WTC11 (cell line): ENCODE measurements at regions of chr10 and their contacts with region 1.

Region 1: GRCh38 chr10:8306685-8307364 is 252.3 kb downstream of the GATA3 start:
- DNase-seq: no peak
- ATAC-seq: peak; percentile 55; the same call in 1 of the 2 replicates
- H3K4me3 Mint-ChIP-seq: no peak overlapping the region
- H3K27ac Mint-ChIP-seq: peak overlapping the region; percentile 55; the same call in 1 of the 2 replicates
- H3K4me1 Mint-ChIP-seq: peaks cover 39% of the 10 kb centered on the region
- H3K27me3 Mint-ChIP-seq: no peaks in the 10 kb centered on the region; the same call in 1 of the 2 replicates
- CTCF ChIP-seq: no peak

Region 2: GRCh38 chr10:8275911-8276310 is 30.9 kb before region 1 on chr10:
- CTCF ChIA-PET with region 1: no interaction called
- POLR2A ChIA-PET with region 1: interaction called, 11 read pairs
- DNase-seq: no peak
- ATAC-seq: no peak
- H3K4me3 Mint-ChIP-seq: no peak overlapping the region
- H3K27ac Mint-ChIP-seq: no peak overlapping the region
- H3K4me1 Mint-ChIP-seq: peaks cover 14% of the 10 kb centered on the region
- H3K27me3 Mint-ChIP-seq: peaks cover 29% of the 10 kb centered on the region
- CTCF ChIP-seq: no peak